ENCODE measurements at regions of chr3 and their contacts with region 1.

Region 1: GRCh38 chr3:49723628-49724551 is at the start of gene GMPPB:
- DNase-seq: peak; percentile 97
- H3K4me3 Mint-ChIP-seq: peak within 1 kb of the TSS; percentile 83
- H3K27ac Mint-ChIP-seq: peak within 1 kb of the TSS; percentile 78
- H3K4me1 Mint-ChIP-seq: peaks cover 14% of the 10 kb centered on the region
- H3K27me3 Mint-ChIP-seq: no peaks in the 10 kb centered on the region
- CTCF ChIP-seq: no peak
- total RNA-seq, gene GMPPB: 84.3 and 88.1 TPM in 2 replicates

Region 2: GRCh38 chr3:49712631-49713319 is 11.1 kb before region 1 on chr3:
- CTCF ChIA-PET with region 1: interaction called, 5 read pairs
- POLR2A ChIA-PET with region 1: interaction called, 10 read pairs
- intact Hi-C with region 1: no loop called
- DNase-seq: no peak
- H3K4me3 Mint-ChIP-seq: no peak overlapping the region
- H3K27ac Mint-ChIP-seq: no peak overlapping the region
- H3K4me1 Mint-ChIP-seq: peaks cover 2% of the 10 kb centered on the region
- H3K27me3 Mint-ChIP-seq: no peaks in the 10 kb centered on the region
- CTCF ChIP-seq: no peak

Region 3: DNA sequence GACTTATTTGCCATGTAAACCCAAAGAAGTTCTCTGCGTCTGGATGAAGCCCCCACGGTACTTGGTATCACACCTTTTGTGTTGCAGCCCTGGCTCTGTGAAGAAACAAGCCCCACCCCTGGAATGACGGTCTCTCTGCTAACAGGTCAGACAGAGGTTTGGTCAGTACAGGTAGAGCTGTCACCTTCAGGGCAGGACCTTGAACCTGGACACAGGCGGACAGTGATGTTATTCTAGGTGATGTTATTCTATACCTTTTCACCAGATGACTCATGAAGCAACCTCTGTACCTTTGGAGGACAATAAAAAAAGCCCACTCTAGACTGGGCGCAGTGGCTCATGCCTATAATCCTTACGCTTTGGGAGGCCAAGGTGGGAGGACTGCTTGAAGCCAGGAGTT is 10.9 kb after region 1 on chr3:
- CTCF ChIA-PET with region 1: no interaction called
- POLR2A ChIA-PET with region 1: interaction called, 12 read pairs
- intact Hi-C with region 1: no loop called
- DNase-seq: no peak
- H3K4me3 Mint-ChIP-seq: no peak overlapping the region
- H3K27ac Mint-ChIP-seq: no peak overlapping the region
- H3K4me1 Mint-ChIP-seq: peaks cover 6% of the 10 kb centered on the region
- H3K27me3 Mint-ChIP-seq: no peaks in the 10 kb centered on the region
- CTCF ChIP-seq: no peak

Region 4: GRCh38 chr3:49786241-49786958 is 62.5 kb after region 1 on chr3 and contains the start of gene IP6K1:
- CTCF ChIA-PET with region 1: no interaction called
- POLR2A ChIA-PET with region 1: interaction called, 13 read pairs
- intact Hi-C with region 1: no loop called
- DNase-seq: peak; percentile 100
- H3K4me3 Mint-ChIP-seq: peak within 1 kb of the TSS; percentile 84
- H3K27ac Mint-ChIP-seq: peak within 1 kb of the TSS; percentile 97
- H3K4me1 Mint-ChIP-seq: no peaks in the 10 kb centered on the region
- H3K27me3 Mint-ChIP-seq: no peaks in the 10 kb centered on the region
- CTCF ChIP-seq: no peak
- total RNA-seq, gene IP6K1: 43.4 and 44.8 TPM in 2 replicates

Measured in MCF 10A (cell line).